ENCODE measurements at regions of chrX and their contacts with region 1.

Region 1: GRCh38 chrX:50920132-50920531 is 9.6 kb downstream of the BMP15 start:
- DNase-seq: peak; percentile 1
- ATAC-seq: no peak
- H3K4me3 ChIP-seq: no peak overlapping the region
- H3K27ac ChIP-seq: no peak overlapping the region
- H3K4me1 ChIP-seq: no peaks in the 10 kb centered on the region
- H3K27me3 ChIP-seq: no peaks in the 10 kb centered on the region; a peak in 1 of 5 replicates
- CTCF ChIP-seq: peak; percentile 28; the same call in 1 of the 2 replicates
- EP300 ChIP-seq: no peak
- POLR2A ChIP-seq: no peak
- RAD21 ChIP-seq: no peak

Region 2: DNA sequence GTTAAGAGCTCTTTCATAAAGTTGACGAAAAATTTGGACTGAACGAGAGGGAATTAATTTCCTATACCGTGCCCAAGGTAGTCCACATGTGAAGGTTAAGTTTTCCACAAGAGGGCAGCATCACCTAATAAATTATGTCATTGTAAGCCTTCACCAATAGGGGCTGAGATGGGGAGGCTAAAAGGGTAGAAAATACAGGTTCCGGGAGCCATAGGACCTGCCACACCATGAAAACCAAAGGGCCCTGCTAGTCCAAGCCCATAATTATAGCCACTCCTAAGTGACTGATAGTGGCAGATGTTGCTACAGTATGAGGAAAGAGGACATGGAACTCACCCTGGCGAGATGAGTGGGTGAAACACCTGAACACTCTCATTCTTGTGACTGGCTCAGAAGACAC is 228.3 kb before region 1 on chrX:
- CTCF ChIA-PET with region 1: no interaction called
- POLR2A ChIA-PET with region 1: no interaction called
- in situ Hi-C with region 1: no loop called
- intact Hi-C with region 1: loop called (anchors 5 kb)
- DNase-seq: peak; percentile 38
- ATAC-seq: peak; percentile 87
- H3K4me3 ChIP-seq: no peak overlapping the region
- H3K27ac ChIP-seq: no peak overlapping the region
- H3K4me1 ChIP-seq: no peaks in the 10 kb centered on the region
- H3K27me3 ChIP-seq: no peaks in the 10 kb centered on the region
- CTCF ChIP-seq: peak; percentile 56
- EP300 ChIP-seq: no peak
- POLR2A ChIP-seq: no peak
- RAD21 ChIP-seq: 0 out of 2 replicates have a peak, but pooled peaks have one; percentile 16

Region 3: DNA sequence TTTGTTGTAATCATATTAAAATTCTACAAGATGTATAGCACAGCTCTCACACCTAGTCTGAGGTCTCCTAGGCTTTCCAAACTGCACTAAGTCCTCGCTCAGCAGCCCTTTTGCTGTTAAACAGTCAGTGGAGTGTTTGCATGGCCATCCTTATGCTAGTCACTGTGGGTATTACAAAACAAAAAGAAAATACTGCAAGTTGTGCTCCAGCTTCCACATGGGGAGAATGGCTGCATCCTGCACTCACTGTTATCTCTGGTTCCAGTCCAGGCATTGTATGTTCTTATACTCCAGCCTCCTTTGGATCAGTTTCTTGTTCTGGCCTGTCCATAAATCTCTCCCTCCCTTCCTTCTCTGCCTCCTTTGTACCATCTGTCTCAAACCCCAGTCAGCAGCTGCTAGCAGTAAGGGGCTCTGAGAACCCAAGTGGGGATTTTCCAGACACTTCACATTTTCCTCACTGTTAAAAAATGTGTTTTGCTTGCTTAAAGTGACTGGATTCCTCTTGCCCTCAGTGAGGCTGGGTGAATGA is 48.1 kb before region 1 on chrX:
- CTCF ChIA-PET with region 1: no interaction called
- POLR2A ChIA-PET with region 1: no interaction called
- in situ Hi-C with region 1: no loop called
- intact Hi-C with region 1: no loop called
- DNase-seq: no peak
- ATAC-seq: no peak
- H3K4me3 ChIP-seq: no peak overlapping the region
- H3K27ac ChIP-seq: no peak overlapping the region
- H3K4me1 ChIP-seq: no peaks in the 10 kb centered on the region
- H3K27me3 ChIP-seq: no peaks in the 10 kb centered on the region
- CTCF ChIP-seq: no peak
- EP300 ChIP-seq: no peak
- POLR2A ChIP-seq: no peak
- RAD21 ChIP-seq: no peak

Measured in HepG2 (cell line).